ENCODE measurements at regions of chr12 and their contacts with region 1.

Region 1: DNA sequence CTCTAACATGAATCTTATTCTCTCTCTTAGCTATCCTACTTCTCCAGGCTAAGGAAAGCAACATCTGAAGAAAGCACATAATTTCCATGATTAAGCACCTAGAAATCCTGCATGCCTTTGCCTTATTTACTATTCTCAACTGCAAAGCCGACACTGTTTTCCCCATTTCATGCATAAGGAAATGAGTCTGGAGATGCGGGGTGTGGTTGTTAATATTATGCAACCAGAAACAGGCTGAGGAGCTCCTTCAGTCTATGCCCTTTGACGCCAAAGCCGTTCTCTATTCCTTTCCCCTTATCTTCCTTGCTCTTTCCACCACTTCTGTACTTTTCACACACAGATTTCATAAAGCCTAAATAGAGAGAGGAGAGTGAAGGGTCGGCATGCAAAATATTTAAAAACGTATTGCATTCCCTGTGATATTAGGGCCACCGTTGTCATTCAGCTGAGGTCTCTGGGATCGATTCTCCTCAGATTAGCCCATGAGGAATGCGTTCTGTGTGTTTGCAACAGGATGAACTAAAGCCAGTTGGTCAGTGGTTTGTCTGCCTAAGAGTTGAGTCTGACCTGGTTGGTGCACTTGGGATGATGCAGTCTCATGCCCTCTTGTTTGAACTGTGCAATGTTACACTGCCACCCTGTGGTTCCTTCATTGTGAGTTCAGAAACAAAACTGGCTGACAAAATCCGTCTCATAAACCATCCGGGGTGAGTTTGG is 53.1 kb upstream of the PLEKHG7 start:
- DNase-seq: no peak
- ATAC-seq: peak; percentile 98
- H3K4me3 ChIP-seq: peak overlapping the region; percentile 2
- H3K27ac ChIP-seq: no peak overlapping the region
- H3K4me1 ChIP-seq: no peaks in the 10 kb centered on the region
- H3K27me3 ChIP-seq: no peaks in the 10 kb centered on the region
- CTCF ChIP-seq: peak; percentile 70

Region 2: DNA sequence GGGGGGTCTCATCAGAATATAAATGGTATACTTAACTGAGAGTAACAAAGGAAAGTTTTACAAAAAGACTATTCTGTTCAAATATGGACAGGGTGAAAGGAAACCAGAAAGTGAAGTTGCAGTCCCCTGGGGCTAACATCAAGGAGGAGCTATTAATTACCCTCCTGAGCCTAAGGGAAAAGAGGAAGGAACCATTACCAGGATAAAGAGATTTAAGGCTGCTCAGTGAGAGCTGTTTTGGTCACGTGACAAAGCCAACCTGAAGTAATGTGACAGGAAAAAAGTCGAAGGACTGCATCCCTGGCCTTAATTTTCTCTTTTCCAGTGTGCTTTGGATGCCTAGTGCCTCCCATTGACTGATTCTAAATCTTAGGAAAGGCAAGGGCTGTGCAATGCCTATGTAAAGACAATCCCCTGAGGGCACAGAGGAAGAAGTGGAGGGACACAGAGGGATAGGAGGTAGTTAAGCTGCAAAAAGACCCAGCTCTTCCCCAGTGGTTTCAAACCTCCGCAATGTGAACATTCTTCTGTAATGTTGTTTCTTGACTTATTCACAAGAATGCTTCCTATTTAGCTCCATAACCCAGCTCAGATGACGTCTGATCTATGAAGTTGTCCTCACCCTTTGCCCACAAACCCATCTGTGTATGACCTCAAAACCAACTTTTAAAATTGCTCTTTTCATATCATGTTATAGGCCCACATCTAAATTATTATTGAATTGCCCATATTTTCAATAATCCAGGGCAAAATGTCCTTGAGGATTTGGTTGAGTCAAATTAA is 1279.4 kb before region 1 on chr12:
- intact Hi-C with region 1: loop called (anchors 10 kb)
- DNase-seq: no peak
- ATAC-seq: no peak
- H3K4me3 ChIP-seq: no peak overlapping the region
- H3K27ac ChIP-seq: no peak overlapping the region
- H3K4me1 ChIP-seq: no peaks in the 10 kb centered on the region
- H3K27me3 ChIP-seq: no peaks in the 10 kb centered on the region
- CTCF ChIP-seq: no peak

Region 3: DNA sequence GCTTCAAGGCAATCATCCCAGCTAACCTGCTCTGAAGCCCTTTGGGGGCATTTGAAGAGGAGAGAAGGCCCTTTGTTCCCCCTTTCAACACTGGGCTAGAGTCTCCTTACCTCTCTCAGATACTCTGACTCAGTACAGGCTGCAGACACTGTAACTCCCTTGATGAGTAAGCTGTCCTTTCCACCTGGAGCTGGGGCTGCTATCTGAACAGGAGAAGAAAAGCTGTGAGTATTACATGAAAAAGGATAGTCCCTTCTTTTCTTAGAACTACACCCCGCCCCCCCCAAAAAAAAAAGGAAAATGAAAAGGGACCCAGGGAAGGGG is 133.4 kb before region 1 on chr12:
- intact Hi-C with region 1: no loop called
- DNase-seq: no peak
- ATAC-seq: no peak
- H3K4me3 ChIP-seq: no peak overlapping the region
- H3K27ac ChIP-seq: no peak overlapping the region
- H3K4me1 ChIP-seq: no peaks in the 10 kb centered on the region
- H3K27me3 ChIP-seq: no peaks in the 10 kb centered on the region
- CTCF ChIP-seq: no peak

Region 4: GRCh38 chr12:92608151-92609091 is 41.2 kb before region 1 on chr12:
- intact Hi-C with region 1: no loop called
- DNase-seq: no peak
- ATAC-seq: peak; percentile 65
- H3K4me3 ChIP-seq: no peak overlapping the region
- H3K27ac ChIP-seq: no peak overlapping the region
- H3K4me1 ChIP-seq: peaks cover 21% of the 10 kb centered on the region
- H3K27me3 ChIP-seq: no peaks in the 10 kb centered on the region
- CTCF ChIP-seq: peak; percentile 52

Measured in upper lobe of right lung (tissue), 1 donor.